Panc1 (cell line): ENCODE measurements at regions of chr6 and their contacts with region 1.

Region 1: DNA sequence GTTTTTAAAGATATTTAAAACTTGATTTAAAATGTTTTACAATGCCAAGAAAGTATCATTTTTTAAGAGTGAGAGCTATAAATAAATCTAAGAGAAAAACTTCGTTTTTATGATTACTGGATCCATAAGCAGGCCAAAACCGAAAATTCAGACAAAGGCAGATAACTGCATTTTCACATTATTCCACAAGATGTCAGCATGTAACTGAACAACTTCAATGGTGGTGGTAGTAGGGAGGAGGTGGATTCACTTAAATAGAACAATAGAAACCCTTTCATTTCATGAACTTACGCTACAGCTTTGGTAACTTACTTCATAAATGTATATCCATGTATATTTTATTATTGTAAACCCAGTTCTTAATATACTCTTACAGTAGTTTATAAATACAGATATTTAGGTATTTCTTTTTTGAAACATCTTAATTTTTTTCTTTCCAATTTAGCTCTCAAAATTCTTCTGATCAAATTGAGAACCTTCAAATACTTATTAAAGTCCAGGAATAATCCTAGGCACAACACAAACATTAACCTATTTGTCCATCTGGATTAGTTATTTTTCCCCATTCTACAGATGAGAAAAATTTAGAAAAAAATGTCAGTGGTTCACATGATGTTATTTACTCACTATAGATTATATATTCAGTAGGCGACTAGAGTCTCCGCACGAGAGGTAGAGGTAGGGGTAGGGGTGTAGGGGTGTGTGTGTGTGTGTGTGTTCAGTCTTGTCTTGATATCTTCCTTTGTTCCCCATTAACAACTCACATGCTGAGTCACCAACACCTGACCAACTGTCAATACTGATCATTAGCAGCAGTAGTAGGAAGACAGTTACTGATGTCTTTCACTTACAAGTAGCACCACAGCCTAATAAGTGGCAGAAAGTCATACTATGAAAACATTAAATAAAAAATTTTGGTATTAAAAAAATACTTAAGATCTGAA is 111.5 kb downstream of the ARHGAP18 start:
- DNase-seq: peak; percentile 63
- ATAC-seq: peak; percentile 86
- H3K4me3 ChIP-seq: no peak overlapping the region
- H3K27ac ChIP-seq: peak overlapping the region; percentile 23; the same call in 1 of the 2 replicates
- H3K4me1 ChIP-seq: peaks cover 4% of the 10 kb centered on the region
- H3K27me3 ChIP-seq: no peaks in the 10 kb centered on the region
- CTCF ChIP-seq: peak; percentile 76; the same call in 1 of the 2 replicates

Region 2: DNA sequence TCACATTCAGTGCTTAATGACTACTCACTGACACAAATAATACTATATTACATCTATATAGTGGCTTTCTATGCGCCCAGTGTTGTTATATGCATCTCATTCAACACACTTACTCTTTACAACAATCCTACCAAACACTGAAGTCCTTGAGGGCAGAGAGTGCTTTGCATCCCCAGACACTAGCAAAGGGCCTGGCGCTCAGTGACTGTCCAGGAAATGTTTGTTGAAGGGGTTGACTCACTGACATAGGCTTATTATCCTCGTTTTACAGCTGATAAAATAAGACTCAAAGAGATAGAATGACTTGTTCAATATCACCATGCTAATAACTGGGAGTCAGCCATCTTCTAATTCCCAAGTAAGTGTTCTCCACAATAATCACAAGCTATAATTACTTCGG is 51.8 kb before region 1 on chr6:
- CTCF ChIA-PET with region 1: no interaction called
- POLR2A ChIA-PET with region 1: no interaction called
- in situ Hi-C with region 1: no loop called
- intact Hi-C with region 1: no loop called
- DNase-seq: no peak
- ATAC-seq: no peak
- H3K4me3 ChIP-seq: no peak overlapping the region
- H3K27ac ChIP-seq: no peak overlapping the region
- H3K4me1 ChIP-seq: no peaks in the 10 kb centered on the region
- H3K27me3 ChIP-seq: no peaks in the 10 kb centered on the region
- CTCF ChIP-seq: no peak

Region 3: GRCh38 chr6:129730477-129731165 is 132.1 kb after region 1 on chr6:
- CTCF ChIA-PET with region 1: no interaction called
- POLR2A ChIA-PET with region 1: no interaction called
- in situ Hi-C with region 1: no loop called
- intact Hi-C with region 1: loop called (anchors 1 kb)
- DNase-seq: no peak
- ATAC-seq: peak; percentile 70
- H3K4me3 ChIP-seq: no peak overlapping the region
- H3K27ac ChIP-seq: no peak overlapping the region; the same call in 1 of the 2 replicates
- H3K4me1 ChIP-seq: no peaks in the 10 kb centered on the region
- H3K27me3 ChIP-seq: no peaks in the 10 kb centered on the region
- CTCF ChIP-seq: peak; percentile 67

Region 4: GRCh38 chr6:129751384-129751783 is 152.9 kb after region 1 on chr6:
- CTCF ChIA-PET with region 1: no interaction called
- POLR2A ChIA-PET with region 1: no interaction called
- in situ Hi-C with region 1: no loop called
- intact Hi-C with region 1: loop called (anchors 1 kb)
- DNase-seq: no peak
- ATAC-seq: no peak
- H3K4me3 ChIP-seq: no peak overlapping the region
- H3K27ac ChIP-seq: no peak overlapping the region
- H3K4me1 ChIP-seq: peaks cover 13% of the 10 kb centered on the region; the same call in 1 of the 2 replicates
- H3K27me3 ChIP-seq: no peaks in the 10 kb centered on the region
- CTCF ChIP-seq: no peak

Region 5: GRCh38 chr6:129875610-129876520 is 277.3 kb after region 1 on chr6:
- CTCF ChIA-PET with region 1: no interaction called
- POLR2A ChIA-PET with region 1: interaction called, 23 read pairs
- in situ Hi-C with region 1: no loop called
- intact Hi-C with region 1: no loop called
- DNase-seq: no peak
- ATAC-seq: no peak
- H3K4me3 ChIP-seq: no peak overlapping the region
- H3K27ac ChIP-seq: no peak overlapping the region
- H3K4me1 ChIP-seq: no peaks in the 10 kb centered on the region
- H3K27me3 ChIP-seq: no peaks in the 10 kb centered on the region
- CTCF ChIP-seq: no peak

Region 6: DNA sequence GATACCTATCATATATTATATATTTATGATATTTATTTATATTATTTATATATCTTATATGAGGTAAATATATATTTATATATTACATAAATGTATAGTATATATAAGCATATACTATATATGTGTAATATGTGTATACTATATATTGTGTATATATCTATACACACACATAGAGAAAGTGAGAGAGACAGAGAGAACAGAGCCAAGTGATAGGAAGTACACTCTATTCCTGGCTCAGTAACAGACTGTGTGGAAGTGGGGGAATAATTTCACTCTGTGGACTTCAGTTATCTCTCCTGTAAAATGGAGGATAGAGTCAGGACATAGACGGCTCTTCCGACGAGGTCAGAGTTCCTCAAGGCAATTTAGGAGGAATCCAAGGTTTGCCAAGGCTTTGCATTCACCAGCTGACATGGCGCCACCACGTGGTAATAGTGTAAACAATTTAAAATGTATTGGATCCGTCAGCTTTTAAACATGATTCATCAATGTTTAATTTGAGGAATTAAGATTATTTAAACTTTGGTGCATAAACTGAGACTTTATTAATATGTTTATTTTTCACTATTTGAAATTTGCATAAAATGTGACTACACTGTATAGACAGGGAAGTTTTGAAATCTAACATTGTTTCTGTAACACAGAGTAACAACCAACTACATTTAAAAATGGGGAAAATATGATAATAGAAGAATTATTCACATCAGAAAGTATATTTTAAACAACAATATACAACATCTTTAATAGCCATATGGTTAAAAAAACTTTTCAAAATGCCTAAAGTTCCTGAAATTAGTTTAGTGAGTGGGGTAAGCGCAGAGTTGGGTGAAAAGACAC is 338.0 kb after region 1 on chr6:
- CTCF ChIA-PET with region 1: no interaction called
- POLR2A ChIA-PET with region 1: no interaction called
- in situ Hi-C with region 1: no loop called
- intact Hi-C with region 1: loop called (anchors 2 kb)
- DNase-seq: peak; percentile 25
- ATAC-seq: peak; percentile 82; the same call in 1 of the 2 replicates
- H3K4me3 ChIP-seq: 0 out of 4 replicates have a peak overlapping the region, but pooled peaks of 1 of the 2 experiments have one; percentile 24
- H3K27ac ChIP-seq: no peak overlapping the region
- H3K4me1 ChIP-seq: no peaks in the 10 kb centered on the region
- H3K27me3 ChIP-seq: peaks cover 2% of the 10 kb centered on the region
- CTCF ChIP-seq: peak; percentile 83

Region 7: DNA sequence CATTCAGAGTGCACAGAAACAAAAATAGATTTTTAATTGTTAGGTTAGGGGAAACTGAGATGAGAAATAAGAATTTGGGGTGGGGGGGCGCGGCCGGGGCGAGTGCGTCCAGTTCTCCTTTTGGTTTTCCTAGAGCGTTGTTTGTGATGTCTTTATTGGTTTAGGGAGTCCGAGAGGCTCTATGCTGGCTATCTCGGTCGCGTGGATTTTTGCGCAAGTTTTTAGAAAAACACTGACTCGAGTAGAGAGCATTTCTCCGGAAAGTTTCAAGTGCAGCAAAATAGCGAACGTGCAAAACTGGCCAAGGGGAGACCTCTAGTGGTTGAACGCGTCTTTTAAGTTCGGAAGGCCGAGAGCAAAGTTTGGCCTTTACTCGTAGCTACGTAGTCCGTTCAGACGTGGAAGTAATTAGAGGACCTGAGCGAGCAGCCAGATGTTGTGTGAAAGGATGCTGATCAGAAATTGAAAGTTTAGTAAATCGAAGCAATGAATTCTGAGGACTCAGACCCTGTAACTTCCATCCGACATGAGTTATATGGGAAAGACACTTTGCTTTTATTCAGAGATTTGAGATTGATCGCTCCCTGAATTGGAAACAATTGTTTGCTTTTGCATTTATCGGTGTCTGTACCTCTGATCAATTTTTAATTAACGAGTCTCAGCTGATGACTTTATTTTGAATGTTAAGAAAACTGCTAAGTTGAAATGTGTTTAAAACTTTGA is 422.6 kb after region 1 on chr6:
- CTCF ChIA-PET with region 1: interaction called, 3 read pairs
- POLR2A ChIA-PET with region 1: no interaction called
- in situ Hi-C with region 1: no loop called
- intact Hi-C with region 1: loop called (anchors 2 kb)
- DNase-seq: peak; percentile 67
- ATAC-seq: peak; percentile 84
- H3K4me3 ChIP-seq: peak overlapping the region; percentile 57 to 73
- H3K27ac ChIP-seq: no peak overlapping the region
- H3K4me1 ChIP-seq: no peaks in the 10 kb centered on the region
- H3K27me3 ChIP-seq: no peaks in the 10 kb centered on the region; the same call in 1 of the 2 replicates
- CTCF ChIP-seq: peak; percentile 87